HEK293 (cell line): ENCODE measurements at regions of chr16 and their contacts with region 1.

Region 1: GRCh38 chr16:3938848-3939624 is 58.5 kb upstream of the CREBBP start:
- H3K4me3 ChIP-seq: peak overlapping the region; percentile 30
- H3K27ac ChIP-seq: no peak overlapping the region
- H3K4me1 ChIP-seq: no peaks in the 10 kb centered on the region
- CTCF ChIP-seq: peak; percentile 97

Region 2: DNA sequence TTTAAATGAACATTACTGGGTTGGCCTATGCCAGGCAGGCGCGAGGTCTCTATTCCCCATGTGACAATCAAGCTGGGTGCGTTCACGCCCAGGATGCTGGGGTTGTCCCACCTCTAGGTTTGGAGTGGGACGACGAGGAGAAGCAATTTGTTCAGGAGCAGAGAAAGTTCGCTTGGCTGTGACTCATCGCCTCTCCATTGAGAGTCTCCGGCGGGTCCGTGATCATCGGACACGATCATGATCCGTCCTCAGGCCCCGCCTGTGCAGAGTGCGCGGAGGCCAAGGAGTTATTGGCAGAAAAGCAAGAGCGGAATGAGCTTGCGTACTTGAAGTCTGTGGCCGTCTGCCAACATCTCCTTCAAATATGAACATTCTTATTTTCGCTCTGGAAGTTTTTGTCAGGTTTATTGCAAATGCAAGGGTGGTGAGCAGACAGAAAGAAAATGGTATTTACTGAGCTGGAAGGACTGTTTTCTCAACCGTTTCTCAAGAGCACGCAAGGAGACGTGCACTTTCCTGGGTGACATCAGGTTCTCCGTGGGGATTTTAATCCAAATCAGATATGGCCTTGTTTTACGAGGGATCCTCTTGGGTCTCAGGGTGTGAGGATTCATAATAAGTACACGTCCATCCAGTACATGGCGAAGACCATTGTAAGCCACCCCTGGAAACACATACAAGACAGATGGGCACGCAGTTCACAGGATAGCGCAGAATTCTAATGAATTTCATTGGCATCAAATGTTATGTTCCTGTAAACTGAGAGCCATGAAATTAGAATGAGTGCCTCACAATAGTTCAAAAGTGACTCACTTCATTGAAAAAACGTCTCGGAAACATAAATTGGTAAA is 11.5 kb after region 1 on chr16:
- CTCF ChIA-PET with region 1: interaction called, 21 read pairs
- POLR2A ChIA-PET with region 1: interaction called, 3 read pairs
- H3K4me3 ChIP-seq: no peak overlapping the region
- H3K27ac ChIP-seq: no peak overlapping the region
- H3K4me1 ChIP-seq: no peaks in the 10 kb centered on the region
- CTCF ChIP-seq: no peak

Region 3: DNA sequence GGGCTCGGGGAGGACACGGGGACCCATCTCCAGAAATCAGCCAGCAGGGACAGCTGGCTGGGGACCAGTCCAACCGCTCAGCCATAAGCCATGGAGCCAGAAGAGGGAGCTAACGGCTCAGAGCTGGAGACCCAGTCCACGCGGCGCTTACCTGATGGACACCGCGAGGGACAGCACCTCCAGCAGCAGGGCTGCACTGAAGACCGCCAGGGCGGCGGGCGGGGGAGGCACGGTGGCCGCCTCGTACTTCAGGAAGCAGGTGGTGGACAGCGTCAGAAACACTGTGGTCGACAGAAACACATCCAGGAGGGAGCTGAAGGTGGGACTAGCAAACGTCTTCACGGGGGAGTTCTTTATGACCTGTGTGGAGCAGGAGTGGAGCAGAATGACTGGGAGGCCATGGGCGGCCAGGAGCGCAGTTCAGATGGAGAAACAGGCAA is 44.1 kb after region 1 on chr16:
- CTCF ChIA-PET with region 1: interaction called, 10 read pairs
- POLR2A ChIA-PET with region 1: interaction called, 3 read pairs
- H3K4me3 ChIP-seq: no peak overlapping the region
- H3K27ac ChIP-seq: no peak overlapping the region
- H3K4me1 ChIP-seq: peaks cover 8% of the 10 kb centered on the region
- CTCF ChIP-seq: peak; percentile 86